ENCODE measurements at regions of chr11 and their contacts with region 1.

Region 1: DNA sequence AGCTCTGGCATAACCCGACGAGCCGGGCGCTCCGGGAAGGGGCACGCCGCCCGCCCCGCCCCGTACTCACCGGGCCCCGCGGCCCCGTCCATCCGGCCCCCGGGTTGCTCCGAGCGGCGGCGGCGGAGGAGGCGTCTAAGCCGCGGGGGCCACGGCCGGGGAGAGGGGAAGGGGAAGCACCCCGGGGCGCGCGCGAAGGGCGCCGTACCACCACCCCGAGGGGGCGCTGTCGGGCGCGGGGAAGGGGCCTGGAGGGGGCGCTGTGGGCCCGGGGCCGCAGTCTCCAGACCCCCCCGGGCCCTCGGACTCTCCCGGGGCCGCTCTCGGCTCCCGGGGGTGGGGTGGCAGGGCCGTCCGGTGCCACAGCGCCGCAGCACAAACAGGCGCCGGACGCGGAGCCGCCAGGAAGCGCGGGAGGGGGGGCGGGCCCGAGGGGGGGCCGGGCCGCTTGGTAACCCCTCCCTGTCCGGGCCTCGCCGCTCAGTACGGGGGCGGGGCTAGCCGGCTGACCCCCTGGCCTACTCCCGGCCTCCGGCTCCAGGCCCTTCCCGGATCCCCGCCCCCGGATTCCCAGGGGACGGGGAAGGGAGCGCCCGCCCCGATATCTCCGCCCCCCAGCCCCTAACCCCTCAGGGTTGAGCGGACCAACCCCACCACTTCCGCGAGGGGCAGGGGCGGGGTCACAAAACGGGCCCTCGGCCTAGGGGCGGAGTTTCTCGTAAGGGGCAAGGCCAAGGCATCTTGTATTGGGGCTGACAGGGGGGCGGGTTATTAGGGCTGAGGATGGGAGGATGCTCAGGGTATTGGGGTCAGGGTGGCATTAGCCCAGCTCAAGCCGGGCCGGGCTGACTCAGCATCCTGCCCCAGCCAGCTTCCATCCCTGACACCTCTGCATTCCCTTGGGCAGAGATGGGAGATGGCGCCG is at the starts of genes EML3 and ROM1:
- DNase-seq: peak; percentile 79 to 93
- H3K4me3 ChIP-seq: peak within 1 kb of the TSS; percentile 85
- H3K27ac ChIP-seq: peak within 1 kb of the TSS; percentile 66
- H3K4me1 ChIP-seq: peaks cover 35% of the 10 kb centered on the region
- H3K27me3 ChIP-seq: no peaks in the 10 kb centered on the region
- CTCF ChIP-seq: peak; percentile 87
- total RNA-seq, gene EML3: 83.2 and 84.2 TPM in 2 replicates
- total RNA-seq, gene ROM1: 6.2 and 7.0 TPM in 2 replicates

Region 2: GRCh38 chr11:62573592-62574362 is 38.9 kb before region 1 on chr11 and contains the start of gene EEF1G:
- CTCF ChIA-PET with region 1: no interaction called
- POLR2A ChIA-PET with region 1: no interaction called
- intact Hi-C with region 1: loop called (anchors 5 kb)
- DNase-seq: peak; percentile 100
- H3K4me3 ChIP-seq: peak within 1 kb of the TSS; percentile 92
- H3K27ac ChIP-seq: peak within 1 kb of the TSS; percentile 86
- H3K4me1 ChIP-seq: peaks cover 42% of the 10 kb centered on the region
- H3K27me3 ChIP-seq: no peaks in the 10 kb centered on the region
- CTCF ChIP-seq: no peak
- total RNA-seq, gene EEF1G: 1,773 and 2,008 TPM in 2 replicates

Region 3: GRCh38 chr11:62601394-62602140 is 11.1 kb before region 1 on chr11 and contains the start of gene MTA2:
- CTCF ChIA-PET with region 1: interaction called, 12 read pairs
- POLR2A ChIA-PET with region 1: no interaction called
- intact Hi-C with region 1: no loop called
- DNase-seq: peak; percentile 97 to 100
- H3K4me3 ChIP-seq: peak within 1 kb of the TSS; percentile 95
- H3K27ac ChIP-seq: peak within 1 kb of the TSS; percentile 67
- H3K4me1 ChIP-seq: peaks cover 17% of the 10 kb centered on the region
- H3K27me3 ChIP-seq: no peaks in the 10 kb centered on the region
- CTCF ChIP-seq: no peak
- total RNA-seq, gene MTA2: 96.6 and 120 TPM in 2 replicates

Region 4: GRCh38 chr11:62705880-62706849 is 93.5 kb after region 1 on chr11:
- CTCF ChIA-PET with region 1: interaction called, 3 read pairs
- POLR2A ChIA-PET with region 1: no interaction called
- intact Hi-C with region 1: loop called (anchors 5 kb)
- DNase-seq: peak; percentile 82 to 96
- H3K4me3 ChIP-seq: peak overlapping the region; percentile 89
- H3K27ac ChIP-seq: peak overlapping the region; percentile 79
- H3K4me1 ChIP-seq: peaks cover 30% of the 10 kb centered on the region
- H3K27me3 ChIP-seq: no peaks in the 10 kb centered on the region
- CTCF ChIP-seq: no peak

Region 5: DNA sequence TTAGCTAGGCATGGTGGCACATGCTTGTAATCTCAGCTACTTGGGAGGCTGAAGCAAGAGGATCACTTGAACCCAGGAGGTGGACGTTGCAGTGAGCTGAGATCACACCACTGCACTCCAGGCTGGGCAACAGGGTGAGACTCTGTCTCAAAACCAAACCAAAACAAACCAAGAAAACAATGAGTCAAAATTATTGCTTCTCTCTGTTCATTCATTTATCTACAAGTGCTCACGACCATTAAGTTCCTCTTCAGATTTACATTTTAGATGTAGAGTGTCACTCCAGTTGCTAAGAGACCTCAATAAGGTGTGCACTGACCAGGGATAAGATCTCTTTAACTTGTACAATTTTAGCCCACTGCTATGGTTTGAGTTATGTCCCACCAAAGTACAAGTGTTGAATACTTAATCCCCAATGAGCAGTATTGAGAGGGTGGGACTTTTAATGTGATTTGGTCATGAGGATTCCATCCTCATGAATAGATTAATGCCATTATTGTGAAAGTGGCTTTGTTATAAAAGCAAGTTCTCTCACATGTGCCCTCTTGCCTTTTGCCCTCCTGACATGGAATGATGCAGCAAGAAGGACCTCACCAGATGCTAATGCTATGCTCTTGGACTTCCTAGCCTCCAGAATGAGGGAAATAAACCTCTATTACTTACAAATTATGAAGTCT is 106.8 kb after region 1 on chr11:
- CTCF ChIA-PET with region 1: no interaction called
- POLR2A ChIA-PET with region 1: no interaction called
- intact Hi-C with region 1: no loop called
- DNase-seq: no peak
- H3K4me3 ChIP-seq: no peak overlapping the region
- H3K27ac ChIP-seq: no peak overlapping the region
- H3K4me1 ChIP-seq: peaks cover 11% of the 10 kb centered on the region
- H3K27me3 ChIP-seq: no peaks in the 10 kb centered on the region
- CTCF ChIP-seq: no peak

Region 6: GRCh38 chr11:62880803-62881578 is 268.4 kb after region 1 on chr11 and contains the start of gene SLC3A2:
- CTCF ChIA-PET with region 1: no interaction called
- POLR2A ChIA-PET with region 1: no interaction called
- intact Hi-C with region 1: loop called (anchors 5 kb)
- DNase-seq: peak; percentile 85 to 90
- H3K4me3 ChIP-seq: peak within 1 kb of the TSS; percentile 69
- H3K27ac ChIP-seq: peak within 1 kb of the TSS; percentile 96
- H3K4me1 ChIP-seq: peaks cover 48% of the 10 kb centered on the region
- H3K27me3 ChIP-seq: no peaks in the 10 kb centered on the region
- CTCF ChIP-seq: peak; percentile 68
- total RNA-seq, gene SLC3A2: 513 and 619 TPM in 2 replicates